B cell (primary cell): ENCODE measurements at regions of chr1 and their contacts with region 1.

Region 1: DNA sequence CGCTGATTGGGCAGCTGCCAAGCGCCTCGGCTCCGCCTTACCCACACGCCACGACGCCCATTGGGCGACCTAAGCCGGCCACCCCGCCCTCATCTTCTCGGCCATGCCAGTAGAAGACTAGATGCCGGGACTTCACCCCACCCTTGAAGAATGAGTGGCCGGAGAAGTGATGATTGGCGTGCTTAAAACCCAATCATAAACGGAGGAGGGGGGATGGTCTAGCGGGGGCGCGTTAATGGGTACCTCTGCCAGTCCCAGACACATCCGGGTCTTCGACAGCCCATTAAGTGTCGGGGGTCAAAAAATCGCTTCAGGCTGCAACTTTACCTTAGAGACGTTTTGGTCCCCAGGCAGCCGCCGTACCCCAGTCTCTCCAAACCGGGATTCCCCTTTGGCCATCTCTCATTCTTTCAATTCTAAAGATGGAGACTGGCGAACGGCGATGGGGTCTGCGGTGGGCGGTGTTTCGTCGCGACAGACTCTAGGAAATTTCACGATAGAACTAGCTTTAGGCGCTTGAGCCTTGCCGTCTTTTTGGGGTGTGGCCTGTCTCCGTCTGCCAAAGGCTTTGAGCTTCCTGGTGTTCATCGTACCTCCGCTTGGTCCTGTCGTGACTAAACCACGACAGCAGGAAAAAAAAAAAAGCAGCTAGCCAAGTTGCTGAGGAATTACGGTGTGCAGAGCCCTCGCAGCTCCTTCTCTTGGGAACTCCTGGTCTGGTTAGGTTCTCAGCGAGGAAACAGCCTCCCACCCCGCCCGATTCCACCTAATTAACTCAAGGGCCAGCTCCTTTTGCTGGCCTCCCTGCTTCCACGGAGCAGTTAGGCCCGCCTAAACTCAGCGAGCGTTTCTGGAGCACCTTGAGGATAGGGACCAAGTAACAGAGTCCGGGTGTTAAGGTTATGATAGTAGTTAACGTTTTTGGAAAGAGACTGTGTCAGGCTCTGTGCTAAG is at the start of gene GATAD2B:
- DNase-seq: peak; percentile 100
- ATAC-seq: peak; percentile 91
- H3K4me3 ChIP-seq: peak within 1 kb of the TSS; percentile 85 to 98 (median 97)
- H3K4me3 Mint-ChIP-seq: peak within 1 kb of the TSS; percentile 95
- H3K27ac ChIP-seq: peak within 1 kb of the TSS; percentile 84 to 99
- H3K27ac Mint-ChIP-seq: peak within 1 kb of the TSS; percentile 99
- H3K4me1 ChIP-seq: peaks cover 39 to 41% of the 10 kb centered on the region in 2 donors
- H3K4me1 Mint-ChIP-seq: peaks cover 43% of the 10 kb centered on the region
- H3K27me3 ChIP-seq: no peaks in the 10 kb centered on the region
- H3K27me3 Mint-ChIP-seq: no peaks in the 10 kb centered on the region
- CTCF ChIP-seq: no peak
- total RNA-seq, gene GATAD2B: 99.6 and 105 TPM in 2 replicates

Region 2: DNA sequence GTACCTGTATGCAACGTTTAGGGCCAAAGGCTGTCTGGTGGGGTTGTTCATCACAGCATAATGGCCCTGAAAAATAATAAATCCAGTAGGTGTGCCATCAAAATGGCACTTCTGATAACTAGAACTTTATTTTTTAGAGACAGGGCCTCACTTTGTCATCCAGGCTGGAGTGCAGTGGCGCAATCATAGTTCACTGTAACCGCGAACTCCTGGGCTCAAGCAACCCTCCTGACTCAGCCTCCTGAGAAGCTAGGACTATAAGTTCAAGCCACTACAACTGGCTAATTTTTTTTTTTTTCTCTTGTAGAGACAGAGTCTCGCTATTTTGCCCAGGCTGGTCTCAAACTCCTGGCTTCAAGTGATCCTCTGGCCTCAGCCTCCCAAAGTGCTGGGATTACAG is 260.0 kb before region 1 on chr1:
- CTCF ChIA-PET with region 1: no interaction called
- POLR2A ChIA-PET with region 1: no interaction called
- intact Hi-C with region 1: no loop called
- DNase-seq: no peak
- ATAC-seq: no peak
- H3K4me3 ChIP-seq: no peak overlapping the region
- H3K4me3 Mint-ChIP-seq: no peak overlapping the region
- H3K27ac ChIP-seq: no peak overlapping the region
- H3K27ac Mint-ChIP-seq: no peak overlapping the region
- H3K4me1 ChIP-seq: peaks cover 5 to 12% of the 10 kb centered on the region in 2 donors
- H3K4me1 Mint-ChIP-seq: peaks cover 14% of the 10 kb centered on the region
- H3K27me3 ChIP-seq: no peaks in the 10 kb centered on the region
- H3K27me3 Mint-ChIP-seq: no peaks in the 10 kb centered on the region
- CTCF ChIP-seq: no peak

Region 3: DNA sequence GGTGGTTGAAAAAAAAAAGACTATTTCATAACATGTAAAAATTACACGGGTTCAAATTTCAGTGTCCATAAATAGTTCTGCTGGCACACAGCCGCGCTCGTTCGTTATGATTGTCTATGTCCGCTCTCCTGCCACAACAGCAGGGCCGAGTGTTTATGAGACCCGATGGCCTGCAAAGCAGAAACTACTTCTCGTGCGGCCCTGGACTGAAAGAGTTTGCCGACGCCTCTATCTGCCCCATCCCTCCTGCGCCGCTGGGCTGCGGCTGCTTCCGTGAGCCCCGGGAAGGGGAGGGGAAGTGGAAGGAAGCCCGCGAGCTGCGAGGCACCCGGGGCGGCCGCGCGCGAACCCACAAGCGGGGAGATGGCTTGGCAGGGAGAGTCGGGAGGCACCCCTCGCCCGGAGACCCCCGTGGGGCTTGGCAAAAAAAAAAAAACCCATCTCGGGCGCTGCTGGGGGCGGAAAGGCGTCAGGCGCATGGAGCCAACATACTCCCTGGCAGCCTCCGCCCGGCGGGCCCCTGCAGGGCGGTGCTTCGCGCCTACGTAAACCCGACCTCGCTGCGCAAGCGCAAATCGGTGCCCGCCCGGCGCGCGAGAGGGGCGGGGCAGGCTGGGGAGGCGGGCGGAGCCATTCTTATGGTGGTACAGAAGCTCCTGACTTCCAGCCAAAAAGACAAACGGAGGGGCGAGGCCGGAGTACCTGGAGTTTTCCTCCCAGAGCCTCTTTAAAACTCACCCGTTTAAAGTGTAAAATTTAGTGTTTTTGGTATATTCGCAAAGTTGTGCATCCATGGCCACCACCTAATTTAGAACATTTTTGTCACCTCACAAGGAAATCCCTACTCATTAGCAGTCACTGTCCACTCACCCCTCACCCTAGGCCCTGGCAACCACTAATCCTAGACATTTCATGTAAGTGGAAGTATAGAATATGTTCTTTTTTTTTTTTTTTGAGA is 139.7 kb before region 1 on chr1:
- CTCF ChIA-PET with region 1: no interaction called
- POLR2A ChIA-PET with region 1: interaction called, 5 read pairs
- intact Hi-C with region 1: loop called (anchors 2 kb)
- DNase-seq: peak; percentile 95
- ATAC-seq: peak; percentile 97
- H3K4me3 ChIP-seq: peak overlapping the region; percentile 44 to 89 (median 76)
- H3K4me3 Mint-ChIP-seq: peak overlapping the region; percentile 97
- H3K27ac ChIP-seq: peak overlapping the region; percentile 94 to 95
- H3K27ac Mint-ChIP-seq: peak overlapping the region; percentile 93
- H3K4me1 ChIP-seq: peaks cover 7 to 23% of the 10 kb centered on the region in 2 donors
- H3K4me1 Mint-ChIP-seq: peaks cover 18% of the 10 kb centered on the region
- H3K27me3 ChIP-seq: no peaks in the 10 kb centered on the region
- H3K27me3 Mint-ChIP-seq: no peaks in the 10 kb centered on the region
- CTCF ChIP-seq: no peak

Region 4: DNA sequence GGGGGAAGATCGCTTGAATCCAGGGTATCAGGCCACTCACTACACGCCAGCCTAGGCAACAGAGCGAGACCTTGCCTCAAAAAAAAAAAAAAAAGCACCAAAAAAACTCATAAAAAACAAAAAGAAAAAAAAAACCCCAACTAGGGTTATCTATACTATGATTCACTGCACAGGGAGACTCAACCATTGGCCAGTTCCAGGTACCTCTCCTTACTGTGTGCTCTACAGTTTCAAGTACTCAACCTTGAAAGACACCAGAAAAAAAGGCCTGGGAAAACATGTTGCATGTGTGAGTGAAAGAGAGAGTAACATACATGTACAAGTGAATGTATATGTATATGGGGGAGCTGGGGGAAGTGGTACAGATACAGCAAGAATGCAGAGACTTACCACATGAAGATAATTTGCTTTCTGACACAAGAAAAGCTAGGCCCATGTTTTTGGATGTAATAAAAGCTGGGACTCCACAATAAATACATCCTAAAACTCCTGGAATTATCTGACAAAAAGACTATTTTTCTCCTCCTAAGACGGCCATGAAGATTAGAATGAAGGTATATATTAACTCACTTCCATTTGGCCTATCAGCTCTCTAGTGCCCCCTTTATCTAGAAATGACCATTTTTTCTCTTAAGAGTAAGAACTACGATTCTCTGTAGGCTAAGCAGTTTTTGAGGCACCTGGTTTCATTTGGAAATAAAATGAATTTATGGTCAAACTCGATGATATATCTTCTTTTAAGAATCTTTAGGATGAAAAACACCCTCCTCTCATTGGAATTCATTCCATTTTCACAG is 95.9 kb before region 1 on chr1:
- CTCF ChIA-PET with region 1: interaction called, 11 read pairs
- POLR2A ChIA-PET with region 1: interaction called, 3 read pairs
- intact Hi-C with region 1: no loop called
- DNase-seq: no peak
- ATAC-seq: no peak
- H3K4me3 ChIP-seq: no peak overlapping the region
- H3K4me3 Mint-ChIP-seq: no peak overlapping the region
- H3K27ac ChIP-seq: no peak overlapping the region
- H3K27ac Mint-ChIP-seq: no peak overlapping the region
- H3K4me1 ChIP-seq: peaks cover 3 to 4% of the 10 kb centered on the region in 2 donors
- H3K4me1 Mint-ChIP-seq: peaks cover 9% of the 10 kb centered on the region
- H3K27me3 ChIP-seq: no peaks in the 10 kb centered on the region
- H3K27me3 Mint-ChIP-seq: no peaks in the 10 kb centered on the region
- CTCF ChIP-seq: peak; percentile 9

Region 5: GRCh38 chr1:153958111-153958960 is 35.1 kb after region 1 on chr1 and contains the start of gene CRTC2:
- CTCF ChIA-PET with region 1: interaction called, 4 read pairs
- POLR2A ChIA-PET with region 1: interaction called, 6 read pairs
- intact Hi-C with region 1: loop called (anchors 1 kb)
- DNase-seq: peak; percentile 97
- ATAC-seq: peak; percentile 85
- H3K4me3 ChIP-seq: peak within 1 kb of the TSS; percentile 79 to 98 (median 92)
- H3K4me3 Mint-ChIP-seq: peak within 1 kb of the TSS; percentile 100
- H3K27ac ChIP-seq: peak within 1 kb of the TSS; percentile 87 to 97
- H3K27ac Mint-ChIP-seq: peak within 1 kb of the TSS; percentile 97
- H3K4me1 ChIP-seq: peaks cover 44 to 47% of the 10 kb centered on the region in 2 donors
- H3K4me1 Mint-ChIP-seq: peaks cover 67% of the 10 kb centered on the region
- H3K27me3 ChIP-seq: no peaks in the 10 kb centered on the region
- H3K27me3 Mint-ChIP-seq: no peaks in the 10 kb centered on the region
- CTCF ChIP-seq: no peak
- total RNA-seq, gene CRTC2: 153 and 157 TPM in 2 replicates

Region 6: GRCh38 chr1:154220071-154220969 is 297.1 kb after region 1 on chr1 and contains the start of gene UBAP2L:
- CTCF ChIA-PET with region 1: no interaction called
- POLR2A ChIA-PET with region 1: no interaction called
- intact Hi-C with region 1: loop called (anchors 2 kb)
- DNase-seq: peak; percentile 100
- ATAC-seq: peak; percentile 83
- H3K4me3 ChIP-seq: peak within 1 kb of the TSS; percentile 92 to 99 (median 95)
- H3K4me3 Mint-ChIP-seq: peak within 1 kb of the TSS; percentile 97
- H3K27ac ChIP-seq: peak within 1 kb of the TSS; percentile 98 to 100
- H3K27ac Mint-ChIP-seq: peak within 1 kb of the TSS; percentile 97
- H3K4me1 ChIP-seq: peaks cover 34 to 39% of the 10 kb centered on the region in 2 donors
- H3K4me1 Mint-ChIP-seq: peaks cover 66% of the 10 kb centered on the region
- H3K27me3 ChIP-seq: no peaks in the 10 kb centered on the region
- H3K27me3 Mint-ChIP-seq: no peaks in the 10 kb centered on the region
- CTCF ChIP-seq: no peak
- total RNA-seq, gene UBAP2L: 218 and 219 TPM in 2 replicates